Activated naive CD4-positive, alpha-beta T cell treated with anti-CD3 and anti-CD28 coated beads for 36 hours (primary cell): ENCODE measurements at regions of chr1 and their contacts with region 1.

Region 1: GRCh38 chr1:61741711-61742619 is at the start of gene PATJ:
- DNase-seq: peak; percentile 65
- H3K4me3 Mint-ChIP-seq: peak within 1 kb of the TSS; percentile 93
- H3K27ac Mint-ChIP-seq: peak within 1 kb of the TSS; percentile 83
- H3K4me1 Mint-ChIP-seq: peaks cover 20% of the 10 kb centered on the region
- H3K27me3 Mint-ChIP-seq: no peaks in the 10 kb centered on the region
- total RNA-seq, gene PATJ: 13.3 to 13.5 TPM

Region 2: DNA sequence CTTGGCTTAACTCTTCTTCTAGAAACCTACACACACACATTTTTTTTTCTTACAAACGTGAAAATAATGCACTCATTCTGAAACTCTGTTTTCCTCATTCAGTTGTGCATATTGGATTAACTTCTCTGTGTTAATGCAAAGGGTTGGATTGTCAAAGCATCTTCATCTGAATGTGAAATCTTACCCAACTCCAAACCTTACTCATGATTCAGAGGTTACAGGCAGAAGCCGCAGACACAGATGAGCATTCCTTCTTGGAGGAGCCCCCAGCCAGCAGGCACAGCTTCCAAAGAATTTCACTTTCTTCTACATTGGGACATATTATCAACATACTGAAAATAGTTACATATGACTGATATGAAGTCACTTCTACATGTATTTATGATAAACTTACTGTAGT is 16.0 kb after region 1 on chr1:
- CTCF ChIA-PET with region 1: interaction called, 4 read pairs
- intact Hi-C with region 1: loop called (anchors 1 kb)
- DNase-seq: no peak
- H3K4me3 Mint-ChIP-seq: no peak overlapping the region
- H3K27ac Mint-ChIP-seq: no peak overlapping the region
- H3K4me1 Mint-ChIP-seq: peaks cover 8% of the 10 kb centered on the region
- H3K27me3 Mint-ChIP-seq: no peaks in the 10 kb centered on the region

Region 3: GRCh38 chr1:61782771-61783170 is 40.8 kb after region 1 on chr1:
- CTCF ChIA-PET with region 1: interaction called, 3 read pairs
- intact Hi-C with region 1: loop called (anchors 2 kb)
- DNase-seq: peak; percentile 82
- H3K4me3 Mint-ChIP-seq: no peak overlapping the region
- H3K27ac Mint-ChIP-seq: peak overlapping the region; percentile 39
- H3K4me1 Mint-ChIP-seq: peaks cover 39% of the 10 kb centered on the region
- H3K27me3 Mint-ChIP-seq: no peaks in the 10 kb centered on the region

Region 4: DNA sequence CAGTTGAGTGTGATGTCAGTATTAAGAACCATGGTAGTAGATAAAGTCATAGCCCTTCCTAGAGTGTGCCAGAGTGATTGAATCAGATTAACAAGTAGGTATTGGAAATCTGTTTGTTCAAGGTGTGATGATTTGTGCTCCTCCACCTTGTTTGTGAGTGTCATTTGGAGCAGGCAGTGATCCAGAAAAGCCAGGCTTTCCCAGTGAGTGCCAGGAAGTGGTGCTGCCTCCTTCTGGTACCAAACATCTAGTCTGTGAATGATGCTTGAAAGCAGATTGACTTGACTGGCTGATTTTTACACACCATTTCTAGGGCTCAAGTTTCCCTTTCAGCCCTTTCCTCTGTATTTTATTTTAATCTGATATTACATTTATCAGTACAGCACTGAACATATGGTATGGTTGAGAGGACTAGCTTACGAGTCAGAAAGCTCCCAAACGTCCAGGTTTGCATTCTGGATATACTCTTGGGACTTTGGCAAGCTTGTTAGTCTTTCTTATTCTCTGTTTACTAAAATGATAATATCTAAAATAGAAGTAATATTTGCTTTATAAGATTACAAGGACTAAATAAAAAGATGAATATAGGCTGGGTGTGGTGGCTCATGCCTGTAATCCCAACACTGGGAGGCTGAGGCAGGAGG is 101.0 kb after region 1 on chr1:
- CTCF ChIA-PET with region 1: no interaction called
- intact Hi-C with region 1: loop called (anchors 5 kb)
- DNase-seq: peak; percentile 21
- H3K4me3 Mint-ChIP-seq: no peak overlapping the region
- H3K27ac Mint-ChIP-seq: no peak overlapping the region
- H3K4me1 Mint-ChIP-seq: no peaks in the 10 kb centered on the region
- H3K27me3 Mint-ChIP-seq: no peaks in the 10 kb centered on the region